ENCODE measurements at regions of chr15 and their contacts with region 1.

Region 1: DNA sequence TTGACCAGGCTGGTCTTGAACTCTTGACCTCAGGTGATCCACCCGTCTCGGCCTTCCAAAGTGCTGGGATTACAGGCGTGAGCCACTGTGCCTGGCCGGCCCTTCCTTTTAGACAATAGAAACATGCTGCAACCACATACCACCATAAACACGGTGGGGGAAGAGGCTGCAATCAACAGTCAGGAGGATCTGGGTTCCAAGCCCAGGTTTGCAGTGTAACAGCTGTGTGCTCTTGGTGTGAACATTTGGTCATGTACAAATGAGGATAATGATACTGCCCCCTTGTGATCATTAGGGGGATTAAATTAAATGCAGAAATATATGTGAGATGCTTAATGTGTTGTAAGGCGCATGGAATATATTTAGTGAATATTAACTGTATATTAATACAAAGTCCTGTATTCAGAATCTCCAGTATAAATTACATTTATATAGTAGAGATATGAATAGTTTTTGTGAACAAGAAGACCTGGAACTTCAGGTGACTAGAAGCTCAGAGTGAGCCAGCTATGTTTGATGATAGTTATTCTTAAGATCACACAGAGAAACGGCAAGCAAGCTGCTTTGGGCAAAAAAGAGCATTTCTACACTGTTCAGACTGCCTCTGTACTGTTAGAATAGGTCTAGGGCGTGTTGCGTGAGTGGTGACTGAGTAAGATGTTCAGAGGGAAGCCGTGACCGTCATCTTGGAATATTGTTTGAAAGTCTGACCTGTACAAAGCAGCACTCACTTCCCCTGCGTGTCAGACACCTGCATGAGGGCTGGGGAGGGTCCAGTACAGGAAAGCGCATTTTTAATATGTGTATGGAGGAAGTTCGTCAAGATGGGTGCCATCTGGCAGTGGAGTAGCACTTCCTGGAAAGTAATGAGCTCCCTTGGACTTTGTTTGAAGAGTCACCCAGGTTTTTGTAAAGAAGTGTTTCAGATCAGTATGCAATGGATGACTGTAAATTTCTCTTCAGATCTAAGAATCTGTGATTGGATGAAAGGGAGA is 125.8 kb downstream of the PGPEP1L start:
- DNase-seq: peak in 2 of 5 donors; percentile 22 to 25
- H3K4me3 ChIP-seq: no peak overlapping the region
- H3K4me3 Mint-ChIP-seq: no peak overlapping the region
- H3K27ac ChIP-seq: no peak overlapping the region
- H3K27ac Mint-ChIP-seq: no peak overlapping the region
- H3K4me1 ChIP-seq: no peaks in the 10 kb centered on the region
- H3K4me1 Mint-ChIP-seq: no peaks in the 10 kb centered on the region
- H3K27me3 ChIP-seq: no peaks in the 10 kb centered on the region
- H3K27me3 Mint-ChIP-seq: peaks cover 0 to 5% of the 10 kb centered on the region in 2 donors

Region 2: GRCh38 chr15:98518823-98519561 is 362.8 kb before region 1 on chr15:
- CTCF ChIA-PET with region 1: interaction called, 11 read pairs
- POLR2A ChIA-PET with region 1: no interaction called
- DNase-seq: peak in 3 of 5 donors; percentile 6 to 48 (median 25)
- H3K4me3 ChIP-seq: no peak overlapping the region
- H3K4me3 Mint-ChIP-seq: no peak overlapping the region
- H3K27ac ChIP-seq: no peak overlapping the region
- H3K27ac Mint-ChIP-seq: no peak overlapping the region
- H3K4me1 ChIP-seq: no peaks in the 10 kb centered on the region
- H3K4me1 Mint-ChIP-seq: peaks cover 0 to 6% (median 4%) of the 10 kb centered on the region in 3 donors
- H3K27me3 ChIP-seq: no peaks in the 10 kb centered on the region
- H3K27me3 Mint-ChIP-seq: peaks cover 6% of the 10 kb centered on the region in 2 donors

Region 3: GRCh38 chr15:98779463-98780071 is 102.3 kb before region 1 on chr15:
- CTCF ChIA-PET with region 1: interaction called, 27 read pairs
- POLR2A ChIA-PET with region 1: no interaction called
- DNase-seq: peak; percentile 45 to 68 (median 56)
- H3K4me3 ChIP-seq: no peak overlapping the region
- H3K4me3 Mint-ChIP-seq: peak overlapping the region in 4 of 7 donors; percentile 38 to 70 (median 56)
- H3K27ac ChIP-seq: no peak overlapping the region
- H3K27ac Mint-ChIP-seq: peak overlapping the region in 3 of 8 donors; percentile 1 to 84 (median 60)
- H3K4me1 ChIP-seq: peaks cover 17% of the 10 kb centered on the region
- H3K4me1 Mint-ChIP-seq: peaks cover 19 to 25% (median 23%) of the 10 kb centered on the region in 3 donors
- H3K27me3 ChIP-seq: no peaks in the 10 kb centered on the region
- H3K27me3 Mint-ChIP-seq: peaks cover 1 to 22% of the 10 kb centered on the region in 2 donors